B cell (primary cell): ENCODE measurements at regions of chr22 and their contacts with region 1.

Region 1: GRCh38 chr22:21816787-21817496 is 50.5 kb downstream of the MAPK1 start:
- DNase-seq: peak; percentile 92
- ATAC-seq: peak; percentile 88
- H3K4me3 ChIP-seq: peak overlapping the region; percentile 12 to 54 (median 48)
- H3K4me3 Mint-ChIP-seq: peak overlapping the region; percentile 91
- H3K27ac ChIP-seq: peak overlapping the region; percentile 89 to 96
- H3K27ac Mint-ChIP-seq: peak overlapping the region; percentile 97
- H3K4me1 ChIP-seq: peaks cover 57 to 62% of the 10 kb centered on the region in 2 donors
- H3K4me1 Mint-ChIP-seq: peaks cover 73% of the 10 kb centered on the region
- H3K27me3 ChIP-seq: no peaks in the 10 kb centered on the region
- H3K27me3 Mint-ChIP-seq: no peaks in the 10 kb centered on the region
- CTCF ChIP-seq: no peak

Region 2: GRCh38 chr22:21834869-21835268 is 17.9 kb after region 1 on chr22:
- CTCF ChIA-PET with region 1: no interaction called
- POLR2A ChIA-PET with region 1: interaction called, 5 read pairs
- intact Hi-C with region 1: loop called (anchors 1 kb)
- DNase-seq: peak; percentile 82
- ATAC-seq: peak; percentile 91
- H3K4me3 ChIP-seq: peak overlapping the region in 1 of 5 experiments; percentile 9
- H3K4me3 Mint-ChIP-seq: peak overlapping the region; percentile 78
- H3K27ac ChIP-seq: peak overlapping the region; percentile 67 to 91
- H3K27ac Mint-ChIP-seq: peak overlapping the region; percentile 89
- H3K4me1 ChIP-seq: peaks cover 45 to 51% of the 10 kb centered on the region in 2 donors
- H3K4me1 Mint-ChIP-seq: peaks cover 71% of the 10 kb centered on the region
- H3K27me3 ChIP-seq: no peaks in the 10 kb centered on the region
- H3K27me3 Mint-ChIP-seq: no peaks in the 10 kb centered on the region
- CTCF ChIP-seq: no peak

Region 3: GRCh38 chr22:21867528-21868266 is 50.8 kb after region 1 on chr22 and contains the start of gene MAPK1:
- CTCF ChIA-PET with region 1: interaction called, 3 read pairs
- POLR2A ChIA-PET with region 1: interaction called, 5 read pairs
- intact Hi-C with region 1: loop called (anchors 1 kb)
- DNase-seq: peak; percentile 98
- ATAC-seq: peak; percentile 90
- H3K4me3 ChIP-seq: peak within 1 kb of the TSS; percentile 64 to 93 (median 91)
- H3K4me3 Mint-ChIP-seq: peak within 1 kb of the TSS; percentile 94
- H3K27ac ChIP-seq: peak within 1 kb of the TSS; percentile 93 to 100
- H3K27ac Mint-ChIP-seq: peak within 1 kb of the TSS; percentile 93
- H3K4me1 ChIP-seq: peaks cover 39 to 40% of the 10 kb centered on the region in 2 donors
- H3K4me1 Mint-ChIP-seq: peaks cover 45% of the 10 kb centered on the region
- H3K27me3 ChIP-seq: no peaks in the 10 kb centered on the region
- H3K27me3 Mint-ChIP-seq: no peaks in the 10 kb centered on the region
- CTCF ChIP-seq: peak; percentile 39
- total RNA-seq, gene MAPK1: 145 and 155 TPM in 2 replicates

Region 4: GRCh38 chr22:21952586-21953571 is 135.9 kb after region 1 on chr22 and contains the start of gene PPM1F:
- CTCF ChIA-PET with region 1: no interaction called
- POLR2A ChIA-PET with region 1: no interaction called
- intact Hi-C with region 1: loop called (anchors 5 kb)
- DNase-seq: peak; percentile 94
- ATAC-seq: peak; percentile 85
- H3K4me3 ChIP-seq: peak within 1 kb of the TSS; percentile 45 to 81 (median 74)
- H3K4me3 Mint-ChIP-seq: peak within 1 kb of the TSS; percentile 92
- H3K27ac ChIP-seq: peak within 1 kb of the TSS in 1 of 2 donors; percentile 53
- H3K27ac Mint-ChIP-seq: peak within 1 kb of the TSS; percentile 82
- H3K4me1 ChIP-seq: peaks cover 10 to 12% of the 10 kb centered on the region in 2 donors
- H3K4me1 Mint-ChIP-seq: peaks cover 19% of the 10 kb centered on the region
- H3K27me3 ChIP-seq: no peaks in the 10 kb centered on the region
- H3K27me3 Mint-ChIP-seq: no peaks in the 10 kb centered on the region
- CTCF ChIP-seq: peak; percentile 80
- total RNA-seq, gene PPM1F: 30.0 and 33.1 TPM in 2 replicates

Region 5: GRCh38 chr22:22460635-22461034 is 643.7 kb after region 1 on chr22:
- CTCF ChIA-PET with region 1: no interaction called
- POLR2A ChIA-PET with region 1: no interaction called
- intact Hi-C with region 1: no loop called
- DNase-seq: no peak
- ATAC-seq: no peak
- H3K4me3 ChIP-seq: no peak overlapping the region
- H3K4me3 Mint-ChIP-seq: no peak overlapping the region
- H3K27ac ChIP-seq: no peak overlapping the region
- H3K27ac Mint-ChIP-seq: no peak overlapping the region
- H3K4me1 ChIP-seq: peaks cover 13 to 15% of the 10 kb centered on the region in 2 donors
- H3K4me1 Mint-ChIP-seq: peaks cover 19% of the 10 kb centered on the region
- H3K27me3 ChIP-seq: no peaks in the 10 kb centered on the region
- H3K27me3 Mint-ChIP-seq: peaks cover 3% of the 10 kb centered on the region
- CTCF ChIP-seq: peak; percentile 17